ENCODE measurements at regions of chrX and their contacts with region 1.

Region 1: GRCh38 chrX:110531873-110532580 is 173.4 kb downstream of the RTL9 start:
- DNase-seq: no peak
- H3K4me3 ChIP-seq: no peak overlapping the region
- H3K27ac ChIP-seq: no peak overlapping the region
- H3K4me1 ChIP-seq: no peaks in the 10 kb centered on the region
- H3K27me3 ChIP-seq: no peaks in the 10 kb centered on the region
- CTCF ChIP-seq: no peak

Region 2: GRCh38 chrX:110383414-110383813 is 148.6 kb before region 1 on chrX:
- CTCF ChIA-PET with region 1: no interaction called
- POLR2A ChIA-PET with region 1: no interaction called
- intact Hi-C with region 1: no loop called
- DNase-seq: no peak
- H3K4me3 ChIP-seq: no peak overlapping the region
- H3K27ac ChIP-seq: no peak overlapping the region
- H3K4me1 ChIP-seq: no peaks in the 10 kb centered on the region
- H3K27me3 ChIP-seq: no peaks in the 10 kb centered on the region
- CTCF ChIP-seq: no peak

Region 3: DNA sequence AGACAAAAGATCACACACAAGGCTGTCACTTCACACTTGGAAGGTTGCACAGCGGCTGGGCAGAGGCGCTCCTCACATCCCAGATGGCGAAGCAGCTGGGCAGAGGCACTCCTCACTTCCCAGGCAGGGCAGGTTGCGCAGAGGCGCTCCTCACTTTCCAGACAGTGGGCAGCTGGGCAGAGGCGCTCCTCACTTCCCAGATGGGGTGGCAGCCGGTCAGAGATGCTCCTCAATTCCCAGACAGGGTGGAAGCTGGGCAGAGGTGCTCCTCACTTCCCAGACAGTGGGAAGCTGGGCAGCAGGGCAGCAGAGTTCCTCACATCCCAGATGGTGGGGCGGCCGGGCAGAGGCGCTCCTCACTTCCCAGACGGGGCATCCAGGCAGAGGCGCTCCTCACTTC is 25.8 kb after region 1 on chrX:
- CTCF ChIA-PET with region 1: interaction called, 13 read pairs
- POLR2A ChIA-PET with region 1: no interaction called
- intact Hi-C with region 1: no loop called
- DNase-seq: no peak
- H3K4me3 ChIP-seq: no peak overlapping the region
- H3K27ac ChIP-seq: no peak overlapping the region
- H3K4me1 ChIP-seq: no peaks in the 10 kb centered on the region
- H3K27me3 ChIP-seq: no peaks in the 10 kb centered on the region; the same call in 1 of the 2 replicates
- CTCF ChIP-seq: no peak

Measured in PC-9 (cell line).